ENCODE measurements at regions of chr18 and their contacts with region 1.

Region 1: GRCh38 chr18:80108728-80109675 is at the start of gene ADNP2:
- DNase-seq: peak; percentile 41 to 96 (median 80)
- ATAC-seq: peak; percentile 80
- H3K4me3 ChIP-seq: peak within 1 kb of the TSS; percentile 66 to 72
- H3K4me3 Mint-ChIP-seq: peak within 1 kb of the TSS; percentile 84
- H3K27ac ChIP-seq: peak within 1 kb of the TSS; percentile 90 to 94
- H3K27ac Mint-ChIP-seq: peak within 1 kb of the TSS; percentile 95
- H3K4me1 ChIP-seq: peaks cover 16% of the 10 kb centered on the region
- H3K4me1 Mint-ChIP-seq: peaks cover 42% of the 10 kb centered on the region
- H3K27me3 ChIP-seq: no peaks in the 10 kb centered on the region
- H3K27me3 Mint-ChIP-seq: no peaks in the 10 kb centered on the region
- CTCF ChIP-seq: no peak
- total RNA-seq, gene ADNP2: 96.7 to 100 TPM

Region 2: DNA sequence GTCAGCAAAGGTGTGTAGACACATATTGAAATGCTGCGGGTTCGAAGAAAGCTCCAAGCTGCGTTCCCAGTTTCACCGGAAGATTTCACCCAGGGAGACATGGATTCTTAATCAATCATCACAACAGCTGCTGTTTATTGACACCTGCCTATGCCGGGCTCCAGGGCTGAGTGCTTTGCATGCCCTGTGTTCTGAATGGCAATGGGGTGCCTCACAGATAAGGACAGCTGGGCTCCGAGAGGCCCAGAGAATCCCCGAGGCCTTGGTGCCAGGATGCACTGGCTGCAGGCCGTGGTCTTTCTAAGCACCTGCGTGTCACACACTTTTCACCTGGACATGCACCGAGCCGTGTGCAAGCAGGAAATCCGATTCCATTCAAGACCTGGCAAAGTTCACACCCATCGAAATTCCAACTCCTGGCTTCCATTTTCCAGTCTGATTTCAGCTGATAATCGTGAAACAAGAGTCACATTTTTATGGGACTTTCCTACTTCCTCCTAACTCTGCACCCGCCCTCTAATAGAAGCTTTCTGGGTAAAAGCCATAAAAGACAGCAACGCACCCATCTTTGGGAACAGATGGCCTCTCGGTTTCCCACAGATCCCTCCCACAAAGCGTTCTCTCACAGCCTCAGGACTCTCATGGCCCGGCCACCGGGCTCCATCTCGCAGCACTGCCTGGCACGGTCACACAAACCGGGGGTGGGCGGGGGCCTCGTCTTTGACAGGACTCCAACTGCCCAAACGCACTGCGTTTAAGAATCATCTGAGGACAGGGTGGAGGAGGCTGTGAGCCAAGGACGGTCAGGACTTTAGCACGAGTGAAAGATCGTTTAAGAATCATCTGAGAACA is 1375.0 kb before region 1 on chr18:
- CTCF ChIA-PET with region 1: no interaction called
- POLR2A ChIA-PET with region 1: no interaction called
- intact Hi-C with region 1: no loop called
- DNase-seq: no peak
- ATAC-seq: no peak
- H3K4me3 ChIP-seq: no peak overlapping the region
- H3K4me3 Mint-ChIP-seq: no peak overlapping the region
- H3K27ac ChIP-seq: no peak overlapping the region
- H3K27ac Mint-ChIP-seq: no peak overlapping the region
- H3K4me1 ChIP-seq: no peaks in the 10 kb centered on the region
- H3K4me1 Mint-ChIP-seq: no peaks in the 10 kb centered on the region
- H3K27me3 ChIP-seq: peaks cover 0 to 6% of the 10 kb centered on the region in 2 experiments
- H3K27me3 Mint-ChIP-seq: no peaks in the 10 kb centered on the region
- CTCF ChIP-seq: no peak

Region 3: DNA sequence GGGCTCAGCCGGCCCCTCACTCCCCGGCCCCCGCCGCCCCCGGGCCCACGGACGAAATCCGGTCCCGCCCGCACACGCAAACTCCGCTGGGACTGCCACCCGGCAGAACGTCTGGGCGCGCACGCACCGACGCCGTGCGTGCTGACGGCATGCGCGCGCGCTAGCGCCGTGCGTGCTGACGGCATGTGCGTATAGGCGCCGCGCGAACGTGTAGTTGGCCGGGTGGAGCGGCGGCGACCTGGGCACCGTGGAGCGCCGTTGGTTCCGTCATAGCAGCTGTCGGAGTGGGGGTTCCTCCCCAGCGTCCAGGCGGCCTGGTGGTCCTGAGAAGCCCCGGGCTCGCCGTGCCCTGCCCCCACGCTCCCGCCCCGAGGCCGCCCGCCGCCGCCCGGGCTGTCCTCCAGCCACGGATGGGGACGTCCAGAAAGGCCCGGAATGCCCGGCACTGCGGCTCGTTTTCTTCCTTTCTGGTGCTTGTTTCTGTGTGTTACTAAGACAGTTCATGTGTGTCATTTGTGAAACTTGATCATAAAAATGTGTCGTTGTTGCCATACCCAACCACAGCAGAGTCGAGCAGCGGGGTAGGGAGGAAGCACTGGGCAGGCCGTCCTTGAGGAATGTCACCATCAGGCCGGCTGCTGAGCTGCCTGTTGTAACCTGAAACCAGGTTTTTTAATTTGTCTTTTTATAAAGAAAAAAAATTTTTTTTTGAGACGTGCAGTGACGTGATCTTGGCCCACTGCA is 120.4 kb before region 1 on chr18 and contains the start of gene TXNL4A:
- CTCF ChIA-PET with region 1: no interaction called
- POLR2A ChIA-PET with region 1: interaction called, 3 read pairs
- intact Hi-C with region 1: loop called (anchors 2 kb)
- DNase-seq: peak; percentile 67 to 95 (median 83)
- ATAC-seq: peak; percentile 95
- H3K4me3 ChIP-seq: peak within 1 kb of the TSS; percentile 74 to 97
- H3K4me3 Mint-ChIP-seq: peak within 1 kb of the TSS; percentile 90
- H3K27ac ChIP-seq: peak within 1 kb of the TSS; percentile 91 to 98
- H3K27ac Mint-ChIP-seq: peak within 1 kb of the TSS; percentile 96
- H3K4me1 ChIP-seq: peaks cover 40% of the 10 kb centered on the region
- H3K4me1 Mint-ChIP-seq: peaks cover 43% of the 10 kb centered on the region
- H3K27me3 ChIP-seq: no peaks in the 10 kb centered on the region
- H3K27me3 Mint-ChIP-seq: no peaks in the 10 kb centered on the region
- CTCF ChIP-seq: no peak
- total RNA-seq, gene TXNL4A: 62.0 to 69.0 TPM

Region 4: GRCh38 chr18:80126797-80127196 is 17.8 kb after region 1 on chr18:
- CTCF ChIA-PET with region 1: no interaction called
- POLR2A ChIA-PET with region 1: interaction called, 3 read pairs
- intact Hi-C with region 1: loop called (anchors 1 to 2 kb)
- DNase-seq: peak in 4 of 9 experiments; percentile 25 to 66 (median 47)
- ATAC-seq: peak; percentile 78
- H3K4me3 ChIP-seq: no peak overlapping the region
- H3K4me3 Mint-ChIP-seq: peak overlapping the region; percentile 23
- H3K27ac ChIP-seq: peak overlapping the region in 1 of 2 experiments; percentile 15
- H3K27ac Mint-ChIP-seq: peak overlapping the region; percentile 58
- H3K4me1 ChIP-seq: peaks cover 31% of the 10 kb centered on the region
- H3K4me1 Mint-ChIP-seq: peaks cover 61% of the 10 kb centered on the region
- H3K27me3 ChIP-seq: no peaks in the 10 kb centered on the region
- H3K27me3 Mint-ChIP-seq: no peaks in the 10 kb centered on the region
- CTCF ChIP-seq: no peak

Region 5: DNA sequence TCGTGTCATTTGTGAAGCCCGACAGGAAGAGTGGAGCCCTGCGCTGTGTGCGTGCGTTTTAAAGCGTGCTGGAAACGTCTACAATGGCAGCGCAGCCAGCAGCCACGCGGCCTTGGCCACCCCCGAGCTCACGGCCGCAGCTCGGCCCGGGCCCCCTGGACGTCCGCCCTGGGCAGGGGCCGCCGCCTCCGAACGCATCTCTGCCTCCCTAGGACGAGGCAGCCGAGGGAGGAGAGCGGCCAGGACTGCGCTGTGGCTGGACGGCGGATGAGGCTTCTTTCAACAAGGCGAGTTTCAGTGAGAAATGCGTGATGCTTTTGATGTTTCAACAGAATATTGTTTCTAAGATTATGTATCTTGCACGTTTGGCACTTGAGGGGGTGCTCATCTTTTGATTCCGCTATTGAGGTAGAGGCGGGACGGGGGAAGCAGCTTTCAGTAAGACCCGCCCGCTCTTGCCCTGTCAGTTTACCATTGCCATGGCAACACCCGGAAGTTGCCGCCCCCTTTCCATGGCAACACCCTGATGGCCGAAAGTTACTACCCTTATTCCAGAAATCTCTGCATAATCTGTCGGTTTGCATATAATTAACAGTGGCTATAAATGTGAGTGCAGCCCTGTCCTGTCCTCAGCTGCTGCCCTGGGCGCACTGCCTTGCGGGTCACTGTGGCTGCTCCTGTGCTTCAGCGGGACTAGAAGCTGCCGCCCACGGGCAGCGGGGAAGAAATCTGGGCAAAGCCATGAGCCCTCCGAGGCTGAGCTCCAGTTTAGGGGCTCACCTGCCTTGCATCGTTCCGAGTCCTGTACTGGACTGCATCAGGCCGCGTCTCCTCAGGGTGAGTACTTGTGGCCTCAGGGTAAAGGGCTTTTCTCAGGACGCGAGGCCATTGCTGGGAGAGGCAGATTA is 38.7 kb after region 1 on chr18:
- CTCF ChIA-PET with region 1: no interaction called
- POLR2A ChIA-PET with region 1: interaction called, 3 read pairs
- intact Hi-C with region 1: loop called (anchors 2 to 5 kb)
- DNase-seq: peak; percentile 52 to 85 (median 76)
- ATAC-seq: peak; percentile 88
- H3K4me3 ChIP-seq: peak overlapping the region; percentile 53 to 61
- H3K4me3 Mint-ChIP-seq: peak overlapping the region; percentile 83
- H3K27ac ChIP-seq: peak overlapping the region in 1 of 2 experiments; percentile 31
- H3K27ac Mint-ChIP-seq: no peak overlapping the region
- H3K4me1 ChIP-seq: peaks cover 11% of the 10 kb centered on the region
- H3K4me1 Mint-ChIP-seq: peaks cover 21% of the 10 kb centered on the region
- H3K27me3 ChIP-seq: no peaks in the 10 kb centered on the region
- H3K27me3 Mint-ChIP-seq: peaks cover 7% of the 10 kb centered on the region
- CTCF ChIP-seq: no peak

Measured in CD8-positive, alpha-beta T cell (primary cell).